GM18951 (cell line): ENCODE measurements at regions of chr12 and their contacts with region 1.

Region 1: GRCh38 chr12:55073043-55074022 is 52.9 kb upstream of the OR9K2 start:
- POLR2A ChIP-seq: no peak

Region 2: GRCh38 chr12:54749191-54749818 is 324.0 kb before region 1 on chr12:
- in situ Hi-C with region 1: loop called (anchors 10 kb)
- POLR2A ChIP-seq: no peak

Region 3: DNA sequence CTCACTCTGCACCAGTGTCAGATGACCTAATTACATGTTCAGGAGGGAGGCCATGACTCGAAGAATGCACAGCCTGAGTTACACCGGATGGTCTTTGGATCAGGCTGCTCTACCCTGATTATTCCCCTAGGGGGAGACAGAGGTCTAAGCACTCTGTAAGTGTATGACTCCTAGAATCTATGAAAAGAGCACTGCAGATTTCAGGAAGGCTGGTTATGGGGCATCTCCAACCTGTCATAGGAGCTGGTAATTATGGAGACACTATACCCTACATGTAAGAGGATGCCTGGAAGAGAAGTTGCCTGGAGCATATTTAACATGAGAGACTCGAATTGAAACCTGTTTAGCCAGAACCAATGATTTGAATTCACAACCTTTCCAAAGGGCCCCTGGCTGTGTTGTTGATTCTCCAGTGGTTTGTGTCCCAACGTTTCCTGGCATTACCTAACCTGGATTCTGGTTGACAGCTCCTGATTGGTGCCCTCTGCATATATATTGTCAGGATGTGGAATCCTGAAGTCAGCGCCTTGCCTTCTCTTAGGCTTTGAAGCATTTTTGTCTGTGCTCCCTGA is 219.3 kb before region 1 on chr12 and contains the start of gene MUCL1:
- in situ Hi-C with region 1: loop called (anchors 25 kb)
- POLR2A ChIP-seq: no peak

Region 4: GRCh38 chr12:54993161-54993835 is 80.0 kb before region 1 on chr12:
- in situ Hi-C with region 1: loop called (anchors 5 kb)
- POLR2A ChIP-seq: no peak